ENCODE measurements at regions of chr4 and their contacts with region 1.

Region 1: GRCh38 chr4:110586131-110586850 is 36.6 kb downstream of the PITX2 start:
- DNase-seq: peak; percentile 46
- H3K4me3 ChIP-seq: peak overlapping the region in 1 of 3 experiments; percentile 19
- H3K27ac ChIP-seq: no peak overlapping the region
- H3K4me1 ChIP-seq: no peaks in the 10 kb centered on the region
- H3K27me3 ChIP-seq: no peaks in the 10 kb centered on the region
- CTCF ChIP-seq: peak; percentile 53 to 68

Region 2: GRCh38 chr4:110567214-110567613 is 19.1 kb before region 1 on chr4:
- CTCF ChIA-PET with region 1: no interaction called
- dilution Hi-C with region 1: no loop called
- in situ Hi-C with region 1: no loop called
- intact Hi-C with region 1: no loop called
- DNase-seq: no peak
- H3K4me3 ChIP-seq: no peak overlapping the region
- H3K27ac ChIP-seq: no peak overlapping the region
- H3K4me1 ChIP-seq: no peaks in the 10 kb centered on the region
- H3K27me3 ChIP-seq: no peaks in the 10 kb centered on the region
- CTCF ChIP-seq: no peak

Region 3: DNA sequence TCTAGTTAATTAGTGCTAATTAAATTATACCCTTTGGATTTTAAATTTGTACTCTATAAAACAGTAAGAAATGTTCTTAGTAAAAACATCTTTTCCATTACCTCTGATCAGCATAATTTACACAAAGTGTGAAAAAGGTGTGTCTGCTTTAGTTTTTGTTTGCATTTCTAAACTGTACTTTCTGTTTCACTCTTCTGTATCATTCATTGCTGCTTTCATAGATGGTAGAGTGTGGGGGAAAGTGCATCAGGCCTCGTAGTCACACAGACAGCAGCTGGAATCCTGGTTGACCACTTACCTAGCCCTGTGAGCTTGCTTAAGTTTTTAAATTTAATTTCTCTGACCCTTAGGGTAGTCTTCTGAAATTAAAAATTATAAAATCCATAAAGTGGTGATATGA is 312.0 kb after region 1 on chr4:
- CTCF ChIA-PET with region 1: interaction called, 11 read pairs
- dilution Hi-C with region 1: no loop called
- in situ Hi-C with region 1: no loop called
- intact Hi-C with region 1: no loop called
- DNase-seq: no peak
- H3K4me3 ChIP-seq: no peak overlapping the region
- H3K27ac ChIP-seq: no peak overlapping the region
- H3K4me1 ChIP-seq: peaks cover 7% of the 10 kb centered on the region
- H3K27me3 ChIP-seq: no peaks in the 10 kb centered on the region
- CTCF ChIP-seq: no peak